ENCODE measurements at regions of chr1 and their contacts with region 1.

Region 1: GRCh38 chr1:109620841-109621286 is 1.2 kb downstream of the AMPD2 start:
- DNase-seq: peak; percentile 99
- ATAC-seq: peak; percentile 86
- H3K4me3 Mint-ChIP-seq: peak overlapping the region; percentile 97
- H3K27ac Mint-ChIP-seq: peak overlapping the region; percentile 97
- H3K4me1 Mint-ChIP-seq: peaks cover 60% of the 10 kb centered on the region
- H3K27me3 Mint-ChIP-seq: no peaks in the 10 kb centered on the region

Region 2: DNA sequence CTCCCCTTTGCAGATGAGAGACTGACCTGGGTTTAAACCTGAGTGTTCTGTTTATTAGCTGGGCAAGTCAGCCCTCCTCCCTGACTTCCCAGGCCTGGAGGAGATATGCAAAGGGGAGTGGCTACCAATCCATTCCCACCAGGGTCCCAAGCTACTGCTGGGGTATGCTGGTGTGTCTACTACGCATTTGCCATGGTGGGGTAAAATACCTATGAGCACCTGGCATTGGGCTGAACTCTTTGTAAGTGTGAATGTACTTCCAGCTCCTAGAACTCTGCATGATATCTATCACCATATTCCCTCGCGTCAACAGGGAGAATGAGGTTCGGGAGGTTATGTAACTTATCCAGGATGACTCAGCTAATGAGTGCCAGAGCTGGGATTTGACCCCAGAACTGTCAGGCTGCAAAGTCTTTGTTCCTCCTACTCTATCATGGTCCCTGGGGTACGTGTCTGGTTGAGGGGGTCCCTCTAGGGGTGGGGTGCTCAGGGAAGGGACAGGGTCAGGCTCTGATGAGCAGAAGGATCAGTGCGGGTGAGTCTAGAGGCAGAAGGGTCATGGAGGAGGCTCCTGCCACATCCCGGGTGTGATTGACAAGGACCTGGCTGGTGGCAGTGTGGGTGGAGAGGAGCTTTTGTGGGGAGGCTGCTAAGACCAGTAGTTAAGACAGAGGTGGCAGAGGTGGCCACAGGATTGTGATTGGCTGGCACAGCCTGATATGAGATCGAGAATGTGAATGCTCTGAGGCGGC is 15.5 kb after region 1 on chr1:
- CTCF ChIA-PET with region 1: interaction called, 14 read pairs
- POLR2A ChIA-PET with region 1: interaction called, 5 read pairs
- intact Hi-C with region 1: no loop called
- DNase-seq: no peak
- ATAC-seq: no peak
- H3K4me3 Mint-ChIP-seq: no peak overlapping the region
- H3K27ac Mint-ChIP-seq: no peak overlapping the region
- H3K4me1 Mint-ChIP-seq: peaks cover 19% of the 10 kb centered on the region
- H3K27me3 Mint-ChIP-seq: no peaks in the 10 kb centered on the region

Region 3: DNA sequence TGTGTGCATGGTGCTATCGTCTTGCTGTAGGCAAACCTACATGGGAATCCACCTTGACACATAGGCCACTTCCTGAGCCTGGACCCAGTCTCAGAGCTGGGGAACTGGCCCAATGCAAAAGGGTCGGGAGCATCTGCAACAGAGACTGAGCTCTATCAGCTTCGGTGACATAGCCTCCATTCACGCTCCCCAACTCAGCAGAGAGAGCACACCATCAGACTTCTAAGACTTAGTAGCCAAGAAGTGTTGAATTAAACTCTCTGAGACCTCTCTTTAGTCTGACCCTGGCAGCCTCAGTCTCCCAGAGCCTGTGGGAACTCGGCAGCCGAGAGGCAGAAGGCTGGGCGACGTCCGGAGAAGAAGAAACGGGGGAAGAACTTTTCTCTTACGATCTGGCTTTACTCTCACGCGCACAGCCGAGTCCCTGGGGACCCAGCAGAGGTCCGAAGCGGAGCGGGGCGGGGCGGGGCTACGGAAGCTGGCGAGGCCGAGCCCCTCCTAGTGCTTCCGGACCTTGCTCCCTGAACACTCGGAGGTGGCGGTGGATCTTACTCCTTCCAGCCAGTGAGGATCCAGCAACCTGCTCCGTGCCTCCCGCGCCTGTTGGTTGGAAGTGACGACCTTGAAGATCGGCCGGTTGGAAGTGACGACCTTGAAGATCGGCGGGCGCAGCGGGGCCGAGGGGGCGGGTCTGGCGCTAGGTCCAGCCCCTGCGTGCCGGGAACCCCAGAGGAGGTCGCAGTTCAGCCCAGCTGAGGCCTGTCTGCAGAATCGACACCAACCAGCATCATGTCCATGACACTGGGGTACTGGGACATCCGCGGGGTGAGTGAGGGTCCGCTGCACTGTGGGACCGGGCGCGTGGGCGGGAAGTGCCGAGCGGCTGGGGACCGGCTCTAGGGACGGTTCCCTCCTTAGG is 35.0 kb after region 1 on chr1 and contains the start of gene GSTM4:
- CTCF ChIA-PET with region 1: interaction called, 3 read pairs
- POLR2A ChIA-PET with region 1: no interaction called
- intact Hi-C with region 1: loop called in 1 of 2 experiments (anchors 1 kb)
- DNase-seq: peak; percentile 85
- ATAC-seq: peak; percentile 96
- H3K4me3 Mint-ChIP-seq: peak within 1 kb of the TSS; percentile 93
- H3K27ac Mint-ChIP-seq: peak within 1 kb of the TSS; percentile 90
- H3K4me1 Mint-ChIP-seq: peaks cover 12% of the 10 kb centered on the region
- H3K27me3 Mint-ChIP-seq: peaks cover 3% of the 10 kb centered on the region
- total RNA-seq, gene GSTM4: 18.1 to 20.6 TPM

Region 4: GRCh38 chr1:109739738-109740660 is 119.1 kb after region 1 on chr1:
- CTCF ChIA-PET with region 1: interaction called, 3 read pairs
- POLR2A ChIA-PET with region 1: no interaction called
- intact Hi-C with region 1: loop called in 1 of 2 experiments (anchors 1 kb)
- DNase-seq: peak; percentile 92
- ATAC-seq: peak; percentile 99
- H3K4me3 Mint-ChIP-seq: peak overlapping the region; percentile 82
- H3K27ac Mint-ChIP-seq: peak overlapping the region; percentile 79
- H3K4me1 Mint-ChIP-seq: peaks cover 16% of the 10 kb centered on the region
- H3K27me3 Mint-ChIP-seq: peaks cover 1% of the 10 kb centered on the region

Region 5: DNA sequence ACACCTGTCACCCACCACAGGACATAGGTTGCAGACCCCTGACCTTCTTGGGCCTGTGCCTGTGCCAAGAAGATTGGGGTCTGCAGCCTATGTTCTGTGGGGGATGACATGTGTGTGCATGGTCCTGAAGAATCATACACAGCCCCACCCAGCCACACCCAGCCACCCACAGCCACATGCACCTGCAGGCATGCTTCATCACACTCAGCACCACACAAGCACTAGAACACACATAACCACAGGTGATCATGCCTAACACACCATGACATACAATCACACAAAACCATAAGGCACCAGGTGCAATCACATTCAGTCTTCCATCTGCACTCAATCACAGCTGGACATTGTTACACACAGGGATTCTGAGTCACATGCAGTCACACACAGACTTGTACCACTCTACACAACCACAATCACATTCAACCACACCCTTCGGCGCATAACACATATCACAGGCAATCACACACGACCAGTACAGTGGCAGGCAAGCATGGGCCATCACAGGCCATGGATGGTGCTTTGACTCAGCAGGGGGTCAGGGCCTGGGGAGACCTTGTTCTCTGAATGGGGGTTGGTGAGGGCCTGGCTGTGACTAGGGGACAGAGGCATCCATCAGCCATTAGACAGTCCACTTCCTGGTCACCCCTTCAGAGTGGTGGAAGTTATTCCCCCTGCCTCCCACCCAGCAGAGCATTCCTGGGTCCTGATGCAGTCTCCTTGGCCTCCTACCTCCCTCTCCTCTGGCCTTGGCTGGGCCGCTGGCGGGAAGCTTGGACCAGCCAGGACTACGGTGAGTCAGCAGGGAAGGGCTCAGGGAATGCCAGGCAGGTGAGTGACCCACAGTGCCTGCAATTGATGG is 187.2 kb after region 1 on chr1:
- CTCF ChIA-PET with region 1: no interaction called
- POLR2A ChIA-PET with region 1: no interaction called
- intact Hi-C with region 1: no loop called
- DNase-seq: no peak
- ATAC-seq: peak; percentile 47
- H3K4me3 Mint-ChIP-seq: no peak overlapping the region
- H3K27ac Mint-ChIP-seq: no peak overlapping the region
- H3K4me1 Mint-ChIP-seq: peaks cover 20% of the 10 kb centered on the region
- H3K27me3 Mint-ChIP-seq: no peaks in the 10 kb centered on the region